Mammary epithelial cell (primary cell): ENCODE measurements at regions of chr13 and their contacts with region 1.

Region 1: GRCh38 chr13:46119883-46120614 is 15.2 kb upstream of the CPB2 start:
- DNase-seq: peak; percentile 39
- H3K4me3 ChIP-seq: no peak overlapping the region
- H3K27ac ChIP-seq: no peak overlapping the region
- H3K4me1 ChIP-seq: peaks cover 12% of the 10 kb centered on the region
- H3K27me3 ChIP-seq: no peaks in the 10 kb centered on the region
- CTCF ChIP-seq: no peak

Region 2: DNA sequence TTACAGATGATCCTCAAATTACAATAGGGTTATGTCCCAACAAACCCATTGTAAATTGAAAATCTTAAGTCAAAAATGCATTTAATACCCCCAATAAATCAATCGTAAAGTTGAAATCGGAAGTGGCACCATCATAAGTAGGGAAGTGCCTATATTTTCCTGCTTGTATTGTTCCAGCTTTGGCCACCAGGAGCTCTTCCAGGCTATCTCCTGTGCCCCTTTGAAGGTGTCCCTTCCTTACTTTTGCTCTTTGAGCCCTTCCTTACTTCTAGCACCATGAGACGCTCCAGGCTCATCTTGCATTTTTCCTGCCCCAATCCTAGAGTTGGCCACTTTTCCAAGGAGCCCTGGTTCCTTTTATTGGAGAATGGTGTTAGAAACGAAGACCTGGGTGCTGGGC is 1380.9 kb before region 1 on chr13:
- CTCF ChIA-PET with region 1: no interaction called
- dilution Hi-C with region 1: no loop called
- in situ Hi-C with region 1: no loop called
- intact Hi-C with region 1: no loop called
- DNase-seq: no peak
- H3K4me3 ChIP-seq: no peak overlapping the region
- H3K27ac ChIP-seq: no peak overlapping the region
- H3K4me1 ChIP-seq: peaks cover 10% of the 10 kb centered on the region
- H3K27me3 ChIP-seq: no peaks in the 10 kb centered on the region
- CTCF ChIP-seq: no peak

Region 3: GRCh38 chr13:46052319-46053161 is 67.5 kb before region 1 on chr13 and contains the start of gene ZC3H13:
- CTCF ChIA-PET with region 1: no interaction called
- dilution Hi-C with region 1: no loop called
- in situ Hi-C with region 1: no loop called
- intact Hi-C with region 1: loop called (anchors 2 kb)
- DNase-seq: peak; percentile 95
- H3K4me3 ChIP-seq: peak within 1 kb of the TSS; percentile 79 to 93 (median 86)
- H3K27ac ChIP-seq: peak within 1 kb of the TSS; percentile 89
- H3K4me1 ChIP-seq: peaks cover 24% of the 10 kb centered on the region
- H3K27me3 ChIP-seq: no peaks in the 10 kb centered on the region
- CTCF ChIP-seq: peak in 1 of 2 donors; percentile 39
- total RNA-seq, gene ZC3H13: 14.7 to 36.7 TPM

Region 4: DNA sequence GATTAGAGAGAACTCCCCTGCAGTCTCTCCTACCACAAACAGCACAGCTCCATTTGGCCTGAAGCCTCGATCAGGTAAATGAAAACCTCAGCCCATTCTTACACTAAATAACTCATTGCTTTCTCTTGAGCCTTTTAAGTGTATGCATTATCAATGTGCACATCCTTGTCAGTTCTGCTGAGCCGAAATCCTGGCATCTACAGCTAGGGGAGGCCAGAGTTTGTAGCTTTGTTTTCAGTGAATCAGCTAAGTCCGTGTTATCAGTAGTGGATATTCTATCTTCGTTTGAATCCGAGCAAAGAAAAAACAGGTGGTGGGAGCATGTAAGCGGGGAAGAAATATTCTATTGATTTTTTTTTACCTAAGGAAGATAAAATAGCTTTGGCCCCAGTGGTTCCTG is 592.5 kb after region 1 on chr13:
- CTCF ChIA-PET with region 1: no interaction called
- dilution Hi-C with region 1: no loop called
- in situ Hi-C with region 1: no loop called
- intact Hi-C with region 1: no loop called
- DNase-seq: no peak
- H3K4me3 ChIP-seq: no peak overlapping the region
- H3K27ac ChIP-seq: no peak overlapping the region
- H3K4me1 ChIP-seq: no peaks in the 10 kb centered on the region
- H3K27me3 ChIP-seq: no peaks in the 10 kb centered on the region
- CTCF ChIP-seq: no peak